ENCODE measurements at regions of chr6 and their contacts with region 1.

Region 1: DNA sequence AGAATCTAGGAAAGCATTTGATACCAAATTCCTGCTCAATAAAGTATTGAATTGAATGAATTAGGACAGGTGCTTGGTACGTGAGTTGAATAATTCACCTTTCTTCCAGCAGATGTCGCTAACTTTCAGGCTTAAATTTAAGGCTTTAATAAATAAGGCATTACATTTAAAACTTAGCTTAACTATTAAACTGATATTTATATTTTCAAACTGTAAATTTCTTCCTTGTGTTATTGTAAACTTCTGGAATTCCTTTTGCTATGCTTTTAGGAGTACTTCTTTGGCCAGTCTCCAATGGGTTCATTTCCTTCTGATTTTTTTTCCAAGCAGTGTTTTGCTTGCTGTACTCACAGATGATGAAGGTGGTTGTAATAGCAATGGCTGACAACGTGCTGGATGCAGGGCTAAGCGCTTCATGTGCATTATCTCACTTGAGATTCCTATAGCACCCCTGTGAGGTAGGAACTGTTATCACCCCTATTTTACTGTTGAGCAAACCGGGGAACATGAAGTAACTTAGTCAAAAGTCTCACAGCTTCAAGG is 71.3 kb upstream of the SLC2A12 start:
- DNase-seq: peak in 25 of 35 experiments; percentile 2 to 72 (median 32)
- ATAC-seq: peak; percentile 59 to 98 (median 88)
- H3K4me3 ChIP-seq: no peak overlapping the region
- H3K4me3 Mint-ChIP-seq: no peak overlapping the region
- H3K27ac ChIP-seq: no peak overlapping the region
- H3K27ac Mint-ChIP-seq: peak overlapping the region in 1 of 2 donors; percentile 66
- H3K4me1 ChIP-seq: no peaks in the 10 kb centered on the region
- H3K4me1 Mint-ChIP-seq: peaks cover 0 to 3% (median 3%) of the 10 kb centered on the region in 3 donors
- H3K27me3 ChIP-seq: peaks cover 0 to 4% of the 10 kb centered on the region in 2 experiments
- H3K27me3 Mint-ChIP-seq: peaks cover 0 to 3% of the 10 kb centered on the region in 2 donors

Region 2: DNA sequence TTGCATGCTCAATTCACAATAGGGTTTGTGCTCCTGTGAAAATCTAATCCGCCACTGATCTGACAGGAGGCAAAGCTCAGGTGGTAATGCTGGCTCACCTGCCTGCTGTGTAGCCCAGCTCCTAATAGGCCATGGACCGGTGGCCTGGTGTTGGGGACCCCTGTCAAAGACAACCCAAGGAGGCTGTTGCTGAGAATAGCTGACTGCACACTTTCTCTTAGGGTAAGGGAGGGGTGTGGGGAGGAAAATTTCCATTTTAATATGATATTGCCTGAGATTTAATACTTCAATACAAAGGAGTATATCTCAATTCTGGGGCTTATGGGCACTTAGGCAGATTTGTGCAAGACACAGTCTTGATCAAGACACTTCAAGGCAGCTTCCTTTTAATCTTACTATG is 720.4 kb after region 1 on chr6:
- CTCF ChIA-PET with region 1: no interaction called
- POLR2A ChIA-PET with region 1: no interaction called
- DNase-seq: no peak
- ATAC-seq: no peak
- H3K4me3 ChIP-seq: no peak overlapping the region
- H3K4me3 Mint-ChIP-seq: no peak overlapping the region
- H3K27ac ChIP-seq: no peak overlapping the region
- H3K27ac Mint-ChIP-seq: no peak overlapping the region
- H3K4me1 ChIP-seq: no peaks in the 10 kb centered on the region
- H3K4me1 Mint-ChIP-seq: no peaks in the 10 kb centered on the region
- H3K27me3 ChIP-seq: no peaks in the 10 kb centered on the region
- H3K27me3 Mint-ChIP-seq: peaks cover 0 to 1% of the 10 kb centered on the region in 2 donors

Region 3: GRCh38 chr6:134950482-134950881 is 826.7 kb after region 1 on chr6:
- CTCF ChIA-PET with region 1: interaction called in 1 of 2 experiments, 12 read pairs
- POLR2A ChIA-PET with region 1: no interaction called
- DNase-seq: no peak
- ATAC-seq: no peak
- H3K4me3 ChIP-seq: no peak overlapping the region
- H3K4me3 Mint-ChIP-seq: no peak overlapping the region
- H3K27ac ChIP-seq: no peak overlapping the region
- H3K27ac Mint-ChIP-seq: no peak overlapping the region
- H3K4me1 ChIP-seq: no peaks in the 10 kb centered on the region
- H3K4me1 Mint-ChIP-seq: no peaks in the 10 kb centered on the region
- H3K27me3 ChIP-seq: no peaks in the 10 kb centered on the region
- H3K27me3 Mint-ChIP-seq: no peaks in the 10 kb centered on the region